ENCODE measurements at regions of chr10 and their contacts with region 1.

Region 1: GRCh38 chr10:102009801-102010425 is 46.1 kb downstream of the ARMH3 start:
- DNase-seq: peak; percentile 62
- ATAC-seq: peak; percentile 99
- H3K4me3 ChIP-seq: no peak overlapping the region
- H3K27ac ChIP-seq: no peak overlapping the region
- H3K4me1 ChIP-seq: peaks cover 9% of the 10 kb centered on the region
- H3K27me3 ChIP-seq: no peaks in the 10 kb centered on the region
- CTCF ChIP-seq: peak; percentile 97 to 99 (median 99); a peak in 5 of 6 replicates
- EP300 ChIP-seq: no peak
- POLR2A ChIP-seq: no peak
- RAD21 ChIP-seq: peak; percentile 100

Region 2: GRCh38 chr10:101625821-101626412 is 384.0 kb before region 1 on chr10:
- CTCF ChIA-PET with region 1: no interaction called
- POLR2A ChIA-PET with region 1: no interaction called
- RAD21 ChIA-PET with region 1: no interaction called
- SMC1A ChIA-PET with region 1: no interaction called
- in situ Hi-C with region 1: no loop called
- intact Hi-C with region 1: no loop called
- DNase-seq: no peak
- ATAC-seq: no peak
- H3K4me3 ChIP-seq: no peak overlapping the region
- H3K27ac ChIP-seq: no peak overlapping the region
- H3K4me1 ChIP-seq: no peaks in the 10 kb centered on the region
- H3K27me3 ChIP-seq: no peaks in the 10 kb centered on the region
- CTCF ChIP-seq: no peak
- EP300 ChIP-seq: no peak
- POLR2A ChIP-seq: no peak
- RAD21 ChIP-seq: no peak

Region 3: DNA sequence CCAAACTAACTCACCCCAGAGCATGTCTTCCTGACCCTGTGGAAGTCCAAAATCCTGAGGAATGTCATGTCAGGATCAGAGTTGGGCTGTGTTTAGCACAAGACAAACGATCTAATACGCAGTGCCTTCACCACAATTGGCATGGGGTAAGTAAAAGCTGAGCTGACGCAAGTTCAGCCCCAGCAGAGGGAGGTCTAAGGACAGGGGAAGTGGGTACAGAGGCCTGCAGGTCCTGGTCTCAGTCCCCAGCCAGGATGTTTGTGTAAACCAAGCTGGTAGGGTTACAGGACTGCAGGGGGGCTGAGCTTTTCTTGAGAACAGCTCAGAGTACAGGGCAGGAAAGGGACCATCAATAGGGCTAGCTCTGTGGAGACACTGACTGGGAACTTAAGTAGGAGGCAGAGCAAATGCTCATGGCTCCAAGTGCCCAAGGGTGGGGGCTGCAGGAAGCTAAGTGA is 161.0 kb before region 1 on chr10:
- CTCF ChIA-PET with region 1: interaction called, 697 read pairs
- POLR2A ChIA-PET with region 1: interaction called, 3 read pairs
- RAD21 ChIA-PET with region 1: interaction called, 538 read pairs
- SMC1A ChIA-PET with region 1: interaction called, 407 read pairs
- in situ Hi-C with region 1: loop called (anchors 5 kb)
- intact Hi-C with region 1: no loop called
- DNase-seq: no peak
- ATAC-seq: no peak
- H3K4me3 ChIP-seq: no peak overlapping the region
- H3K27ac ChIP-seq: no peak overlapping the region
- H3K4me1 ChIP-seq: no peaks in the 10 kb centered on the region
- H3K27me3 ChIP-seq: no peaks in the 10 kb centered on the region
- CTCF ChIP-seq: no peak
- EP300 ChIP-seq: no peak
- POLR2A ChIP-seq: no peak
- RAD21 ChIP-seq: 0 out of 2 replicates have a peak, but pooled peaks have one; percentile 3

Region 4: GRCh38 chr10:101889256-101890210 is 120.4 kb before region 1 on chr10:
- CTCF ChIA-PET with region 1: interaction called, 543 read pairs
- POLR2A ChIA-PET with region 1: interaction called, 55 read pairs
- RAD21 ChIA-PET with region 1: interaction called, 467 read pairs
- SMC1A ChIA-PET with region 1: interaction called, 408 read pairs
- in situ Hi-C with region 1: loop called (anchors 5 kb)
- intact Hi-C with region 1: loop called (anchors 1 kb)
- DNase-seq: peak; percentile 66
- ATAC-seq: peak; percentile 93
- H3K4me3 ChIP-seq: 0 out of 2 replicates have a peak overlapping the region, but pooled peaks have one; percentile 29
- H3K27ac ChIP-seq: peak overlapping the region; percentile 67
- H3K4me1 ChIP-seq: peaks cover 22% of the 10 kb centered on the region
- H3K27me3 ChIP-seq: no peaks in the 10 kb centered on the region
- CTCF ChIP-seq: peak; percentile 86 to 93 (median 91)
- EP300 ChIP-seq: no peak
- POLR2A ChIP-seq: no peak
- RAD21 ChIP-seq: peak; percentile 98

Region 5: GRCh38 chr10:101932183-101932582 is 77.7 kb before region 1 on chr10:
- CTCF ChIA-PET with region 1: interaction called, 11 read pairs
- POLR2A ChIA-PET with region 1: no interaction called
- RAD21 ChIA-PET with region 1: interaction called, 5 read pairs
- SMC1A ChIA-PET with region 1: interaction called, 5 read pairs
- in situ Hi-C with region 1: no loop called
- intact Hi-C with region 1: no loop called
- DNase-seq: no peak
- ATAC-seq: no peak; the same call in 2 of the 3 replicates
- H3K4me3 ChIP-seq: no peak overlapping the region
- H3K27ac ChIP-seq: no peak overlapping the region
- H3K4me1 ChIP-seq: no peaks in the 10 kb centered on the region
- H3K27me3 ChIP-seq: no peaks in the 10 kb centered on the region
- CTCF ChIP-seq: no peak
- EP300 ChIP-seq: no peak
- POLR2A ChIP-seq: no peak
- RAD21 ChIP-seq: no peak

Region 6: GRCh38 chr10:101986625-101986973 is 23.3 kb before region 1 on chr10:
- CTCF ChIA-PET with region 1: interaction called, 13 read pairs
- POLR2A ChIA-PET with region 1: interaction called, 5 read pairs
- RAD21 ChIA-PET with region 1: interaction called, 5 read pairs
- SMC1A ChIA-PET with region 1: interaction called, 9 read pairs
- in situ Hi-C with region 1: no loop called
- intact Hi-C with region 1: no loop called
- DNase-seq: no peak
- ATAC-seq: peak; percentile 94
- H3K4me3 ChIP-seq: peak overlapping the region; percentile 25; the same call in 1 of the 2 replicates
- H3K27ac ChIP-seq: peak overlapping the region; percentile 88
- H3K4me1 ChIP-seq: peaks cover 16% of the 10 kb centered on the region
- H3K27me3 ChIP-seq: no peaks in the 10 kb centered on the region
- CTCF ChIP-seq: no peak
- EP300 ChIP-seq: no peak
- POLR2A ChIP-seq: no peak
- RAD21 ChIP-seq: no peak

Region 7: DNA sequence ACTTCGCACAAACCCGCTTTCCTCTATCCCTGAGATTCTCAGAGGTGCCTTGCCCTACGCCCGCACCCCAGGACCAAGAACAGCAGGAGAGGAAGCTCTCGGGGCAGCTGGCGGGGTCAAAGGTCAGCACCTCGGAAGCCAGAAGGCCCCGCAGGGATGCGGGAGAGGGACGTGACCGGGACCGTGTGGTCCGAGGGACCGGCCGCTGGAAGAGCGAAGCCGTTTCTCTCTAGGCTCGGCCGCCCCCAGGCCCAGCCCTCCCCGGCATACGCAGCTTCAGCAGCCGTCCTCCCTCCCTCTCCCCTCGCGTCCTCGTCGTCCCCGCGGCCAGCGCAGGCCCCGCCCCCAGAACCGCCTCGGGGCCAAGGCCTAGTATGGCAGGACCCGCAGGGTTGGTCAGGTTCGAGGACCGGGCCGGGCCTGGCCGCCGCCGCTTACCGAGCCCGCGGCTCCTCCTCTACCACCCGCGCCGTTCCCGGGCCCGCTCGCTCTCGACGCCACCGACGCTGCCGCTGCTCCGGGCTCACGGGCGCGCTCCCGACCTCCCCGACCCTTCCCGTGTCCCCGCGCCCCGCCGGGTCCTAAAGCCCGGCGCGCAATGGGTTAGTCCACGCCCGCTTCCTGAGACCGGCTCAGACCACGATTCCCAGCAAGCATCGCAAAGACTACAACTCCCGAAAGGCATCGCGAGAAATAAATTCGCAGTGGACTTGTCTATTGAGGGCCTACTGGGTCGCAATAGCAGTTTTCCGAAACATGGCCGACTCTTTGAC is 45.9 kb after region 1 on chr10 and contains the start of gene ARMH3:
- CTCF ChIA-PET with region 1: interaction called, 13 read pairs
- POLR2A ChIA-PET with region 1: interaction called, 4 read pairs
- RAD21 ChIA-PET with region 1: interaction called, 8 read pairs
- SMC1A ChIA-PET with region 1: interaction called, 18 read pairs
- in situ Hi-C with region 1: no loop called
- intact Hi-C with region 1: no loop called
- DNase-seq: peak; percentile 87
- ATAC-seq: peak; percentile 98
- H3K4me3 ChIP-seq: peak within 1 kb of the TSS; percentile 93
- H3K27ac ChIP-seq: peak within 1 kb of the TSS; percentile 77
- H3K4me1 ChIP-seq: 0 out of 2 replicates have a peak, but pooled peaks cover 9% of the 10 kb centered on the region
- H3K27me3 ChIP-seq: no peaks in the 10 kb centered on the region
- CTCF ChIP-seq: no peak
- EP300 ChIP-seq: no peak
- POLR2A ChIP-seq: peak; percentile 83
- RAD21 ChIP-seq: no peak
- polyA plus RNA-seq, gene ARMH3: 13.6 to 14.0 TPM

Measured in GM12878 (cell line).